ENCODE measurements at regions of chr7 and their contacts with region 1.

Region 1: GRCh38 chr7:100049441-100050311 is at the start of gene ZSCAN21:
- DNase-seq: peak; percentile 84
- ATAC-seq: peak; percentile 94
- H3K4me3 ChIP-seq: peak within 1 kb of the TSS; percentile 81
- H3K27ac ChIP-seq: peak within 1 kb of the TSS; percentile 95
- H3K4me1 ChIP-seq: peaks cover 4% of the 10 kb centered on the region; the same call in 1 of the 2 replicates
- H3K27me3 ChIP-seq: no peaks in the 10 kb centered on the region
- CTCF ChIP-seq: peak; percentile 21; the same call in 1 of the 2 replicates
- POLR2A ChIP-seq: peak; percentile 94
- RAD21 ChIP-seq: peak; percentile 22
- total RNA-seq, gene ZSCAN21: 13.1 and 13.3 TPM in 2 replicates

Region 2: DNA sequence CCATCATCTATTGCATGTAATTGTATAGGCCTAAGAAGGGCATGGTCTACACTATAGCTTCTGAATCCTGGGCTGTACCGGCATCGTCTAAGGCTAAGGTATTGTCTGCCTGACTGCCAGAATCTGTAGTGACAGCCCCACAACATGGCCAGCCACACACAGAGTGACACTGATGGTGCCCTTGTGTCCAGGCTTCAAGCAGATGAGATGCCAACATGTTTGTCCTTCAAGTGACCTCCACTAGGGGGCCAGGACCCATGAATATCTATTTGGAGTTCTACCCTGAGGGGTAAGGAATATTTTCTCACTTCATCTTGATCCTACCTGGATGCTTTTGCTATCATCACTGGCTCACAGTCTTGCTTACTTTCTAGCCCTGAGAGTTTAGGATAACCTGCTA is 316.2 kb before region 1 on chr7:
- CTCF ChIA-PET with region 1: no interaction called
- POLR2A ChIA-PET with region 1: interaction called, 15 read pairs
- dilution Hi-C with region 1: no loop called
- in situ Hi-C with region 1: no loop called
- intact Hi-C with region 1: no loop called
- DNase-seq: no peak
- ATAC-seq: no peak
- H3K4me3 ChIP-seq: no peak overlapping the region
- H3K27ac ChIP-seq: no peak overlapping the region
- H3K4me1 ChIP-seq: 0 out of 2 replicates have a peak, but pooled peaks cover 2% of the 10 kb centered on the region
- H3K27me3 ChIP-seq: peaks cover 2% of the 10 kb centered on the region
- CTCF ChIP-seq: no peak
- POLR2A ChIP-seq: no peak
- RAD21 ChIP-seq: no peak

Region 3: DNA sequence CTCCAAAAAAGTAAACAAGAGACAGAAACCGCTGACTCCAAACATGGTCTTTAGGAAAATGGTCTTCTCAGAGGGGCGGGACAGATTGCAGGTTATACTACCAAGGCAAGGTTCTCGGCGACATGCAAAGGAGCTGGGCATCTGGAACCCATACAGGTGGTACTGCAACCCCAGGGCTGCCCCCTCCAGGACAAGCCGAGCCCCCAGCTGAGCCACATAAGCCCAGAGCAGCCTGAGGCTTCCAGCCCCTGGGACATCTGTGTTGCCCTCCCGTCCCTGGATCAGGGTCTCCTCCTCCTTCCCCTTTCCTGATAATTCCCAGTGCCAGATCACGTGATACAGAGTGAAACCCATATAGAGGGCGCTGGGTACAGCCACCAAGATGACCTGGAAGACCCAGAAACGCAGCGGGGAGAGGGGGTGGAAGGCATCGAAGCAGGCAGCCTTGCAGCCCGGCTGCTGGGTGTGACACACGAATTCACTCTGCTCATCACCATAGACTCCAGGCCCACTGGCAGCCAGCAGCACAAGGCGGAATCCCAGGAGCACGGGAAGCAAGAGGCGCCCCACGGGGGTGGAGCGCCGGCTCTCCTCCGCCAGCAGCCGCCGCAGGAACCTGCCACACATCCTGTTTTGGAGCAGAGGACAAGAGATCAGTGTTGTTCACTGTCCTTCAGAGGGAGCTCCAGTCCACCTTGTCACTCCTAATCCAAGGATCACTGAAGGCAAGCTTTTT is 120.5 kb before region 1 on chr7 and contains the start of gene GJC3:
- CTCF ChIA-PET with region 1: no interaction called
- POLR2A ChIA-PET with region 1: no interaction called
- dilution Hi-C with region 1: no loop called
- in situ Hi-C with region 1: no loop called
- intact Hi-C with region 1: loop called (anchors 10 kb)
- DNase-seq: peak; percentile 52
- ATAC-seq: peak; percentile 91
- H3K4me3 ChIP-seq: peak within 1 kb of the TSS; percentile 16; the same call in 1 of the 2 replicates
- H3K27ac ChIP-seq: no peak within 1 kb of the TSS
- H3K4me1 ChIP-seq: no peaks in the 10 kb centered on the region
- H3K27me3 ChIP-seq: peaks cover 21% of the 10 kb centered on the region
- CTCF ChIP-seq: peak; percentile 38
- POLR2A ChIP-seq: no peak
- RAD21 ChIP-seq: peak; percentile 36; the same call in 1 of the 2 replicates
- total RNA-seq, gene GJC3: not detected in 2 replicates

Region 4: DNA sequence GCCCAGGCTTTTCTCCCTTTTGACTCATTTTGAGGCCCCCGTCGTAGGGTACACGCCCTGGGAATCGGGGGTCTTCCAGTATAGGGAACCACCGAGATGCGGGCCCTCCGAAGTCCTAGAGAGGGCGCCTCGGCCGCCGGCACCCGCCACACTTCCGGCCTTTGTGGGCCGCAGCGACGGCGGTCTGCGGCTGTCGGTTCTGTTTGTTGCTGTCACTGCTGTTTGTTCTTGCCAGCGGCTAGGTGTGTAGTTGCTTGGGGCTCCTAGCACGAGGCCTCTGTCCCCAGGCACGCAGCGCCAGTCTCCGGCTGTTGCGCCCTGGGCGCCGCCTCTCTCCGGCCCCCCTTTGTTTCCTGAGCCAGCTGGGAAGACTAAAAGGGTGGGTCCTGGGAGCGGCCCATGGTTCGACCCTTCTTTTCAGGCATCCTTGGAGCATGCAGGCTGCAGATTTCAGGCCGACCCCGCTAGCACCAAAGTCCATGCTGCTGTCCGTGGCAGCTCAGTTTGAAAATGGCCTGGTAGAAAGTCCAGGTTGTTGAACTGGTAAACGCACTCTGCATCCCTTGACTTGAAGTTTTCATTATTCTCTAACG is 52.0 kb before region 1 on chr7:
- CTCF ChIA-PET with region 1: interaction called, 7 read pairs
- POLR2A ChIA-PET with region 1: no interaction called
- dilution Hi-C with region 1: no loop called
- in situ Hi-C with region 1: loop called (anchors 5 kb)
- intact Hi-C with region 1: loop called (anchors 1 kb)
- DNase-seq: no peak
- ATAC-seq: peak; percentile 46
- H3K4me3 ChIP-seq: peak overlapping the region; percentile 39; the same call in 1 of the 2 replicates
- H3K27ac ChIP-seq: no peak overlapping the region
- H3K4me1 ChIP-seq: peaks cover 1% of the 10 kb centered on the region; the same call in 1 of the 2 replicates
- H3K27me3 ChIP-seq: peaks cover 5% of the 10 kb centered on the region
- CTCF ChIP-seq: no peak
- POLR2A ChIP-seq: no peak
- RAD21 ChIP-seq: no peak

Region 5: GRCh38 chr7:100034871-100035510 is 14.7 kb before region 1 on chr7:
- CTCF ChIA-PET with region 1: no interaction called
- POLR2A ChIA-PET with region 1: interaction called, 3 read pairs
- dilution Hi-C with region 1: no loop called
- in situ Hi-C with region 1: no loop called
- intact Hi-C with region 1: loop called (anchors 2 kb)
- DNase-seq: peak; percentile 98
- ATAC-seq: peak; percentile 98
- H3K4me3 ChIP-seq: no peak overlapping the region
- H3K27ac ChIP-seq: peak overlapping the region; percentile 28; the same call in 1 of the 2 replicates
- H3K4me1 ChIP-seq: peaks cover 16% of the 10 kb centered on the region
- H3K27me3 ChIP-seq: no peaks in the 10 kb centered on the region
- CTCF ChIP-seq: no peak
- POLR2A ChIP-seq: peak; percentile 54
- RAD21 ChIP-seq: 0 out of 2 replicates have a peak, but pooled peaks have one; percentile 8